WTC11 (cell line): ENCODE measurements at regions of chr5 and their contacts with region 1.

Region 1: GRCh38 chr5:142655339-142656267 is 30.3 kb downstream of the FGF1 start:
- DNase-seq: peak; percentile 88
- ATAC-seq: peak; percentile 90
- H3K4me3 Mint-ChIP-seq: no peak overlapping the region
- H3K27ac Mint-ChIP-seq: no peak overlapping the region
- H3K4me1 Mint-ChIP-seq: peaks cover 14% of the 10 kb centered on the region
- H3K27me3 Mint-ChIP-seq: no peaks in the 10 kb centered on the region
- CTCF ChIP-seq: peak; percentile 93

Region 2: DNA sequence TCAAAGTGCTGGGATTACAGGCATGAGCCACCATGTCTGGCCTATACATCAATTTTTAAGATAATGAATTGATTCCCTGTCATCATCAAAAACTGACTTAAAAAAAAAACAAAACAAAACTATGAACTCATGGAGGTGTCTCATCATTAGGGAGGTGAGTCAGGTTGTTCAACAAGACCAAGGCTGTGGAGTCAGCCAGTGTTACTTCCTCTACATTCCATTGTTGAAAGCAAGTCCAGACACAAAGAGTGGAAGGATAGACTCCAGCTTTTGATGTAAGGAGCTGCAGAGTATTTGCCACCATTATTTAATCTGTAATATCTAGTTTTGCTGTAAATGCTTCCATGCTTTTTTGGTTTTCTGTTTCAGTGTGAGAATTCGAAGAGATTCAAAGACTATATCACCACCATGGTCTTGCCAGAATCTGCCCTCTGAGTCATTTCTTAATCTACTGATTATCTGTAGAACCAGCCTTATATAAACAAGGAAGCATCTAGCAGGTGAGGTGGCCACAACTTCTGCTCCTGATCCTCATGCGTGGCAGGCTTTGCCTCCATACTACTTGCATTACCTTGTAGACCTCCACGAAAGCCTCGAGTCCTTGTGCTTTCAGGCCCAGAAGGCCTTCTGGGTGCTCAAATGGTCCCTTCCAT is 125.9 kb before region 1 on chr5:
- CTCF ChIA-PET with region 1: no interaction called
- POLR2A ChIA-PET with region 1: no interaction called
- DNase-seq: no peak
- ATAC-seq: no peak
- H3K4me3 Mint-ChIP-seq: no peak overlapping the region
- H3K27ac Mint-ChIP-seq: no peak overlapping the region; the same call in 1 of the 2 replicates
- H3K4me1 Mint-ChIP-seq: peaks cover 5% of the 10 kb centered on the region
- H3K27me3 Mint-ChIP-seq: no peaks in the 10 kb centered on the region
- CTCF ChIP-seq: no peak

Region 3: DNA sequence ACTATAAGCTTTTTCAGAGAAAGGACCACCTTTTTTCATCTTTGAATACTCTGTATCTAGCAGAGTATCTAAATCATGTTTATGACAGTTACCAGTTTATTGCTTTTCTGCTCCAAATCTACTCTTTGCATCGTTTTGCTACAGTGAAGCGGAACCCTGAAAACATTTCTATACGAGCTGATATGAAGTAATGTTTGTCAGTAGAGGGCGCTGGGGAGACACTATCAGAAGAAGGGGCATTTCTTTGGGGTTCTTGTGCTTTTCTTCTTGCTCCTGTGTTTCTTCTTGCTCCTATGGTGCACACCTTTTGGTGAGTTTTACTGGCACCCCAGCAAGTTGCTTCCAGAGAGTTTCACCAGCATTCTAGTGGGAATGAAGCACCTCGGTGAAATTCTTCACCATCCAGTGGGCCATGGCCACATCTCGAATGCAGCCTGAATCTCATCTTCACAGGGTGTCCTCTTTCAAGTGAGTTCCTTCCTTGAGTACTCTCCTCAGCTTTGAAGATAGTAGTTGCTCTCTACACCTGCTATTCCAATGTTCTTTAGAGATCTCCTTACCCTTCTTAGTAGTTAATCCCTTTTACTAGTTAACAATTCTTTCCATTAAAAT is 68.1 kb before region 1 on chr5:
- CTCF ChIA-PET with region 1: interaction called, 10 read pairs
- POLR2A ChIA-PET with region 1: no interaction called
- DNase-seq: peak; percentile 53
- ATAC-seq: peak; percentile 81
- H3K4me3 Mint-ChIP-seq: no peak overlapping the region
- H3K27ac Mint-ChIP-seq: no peak overlapping the region
- H3K4me1 Mint-ChIP-seq: peaks cover 20% of the 10 kb centered on the region
- H3K27me3 Mint-ChIP-seq: no peaks in the 10 kb centered on the region; the same call in 1 of the 2 replicates
- CTCF ChIP-seq: peak; percentile 39; the same call in 1 of the 2 replicates

Region 4: GRCh38 chr5:142611154-142611553 is 44.4 kb before region 1 on chr5:
- CTCF ChIA-PET with region 1: interaction called, 42 read pairs
- POLR2A ChIA-PET with region 1: no interaction called
- DNase-seq: peak; percentile 85
- ATAC-seq: peak; percentile 97; the same call in 1 of the 2 replicates
- H3K4me3 Mint-ChIP-seq: no peak overlapping the region
- H3K27ac Mint-ChIP-seq: no peak overlapping the region
- H3K4me1 Mint-ChIP-seq: peaks cover 9% of the 10 kb centered on the region
- H3K27me3 Mint-ChIP-seq: no peaks in the 10 kb centered on the region
- CTCF ChIP-seq: peak; percentile 79

Region 5: DNA sequence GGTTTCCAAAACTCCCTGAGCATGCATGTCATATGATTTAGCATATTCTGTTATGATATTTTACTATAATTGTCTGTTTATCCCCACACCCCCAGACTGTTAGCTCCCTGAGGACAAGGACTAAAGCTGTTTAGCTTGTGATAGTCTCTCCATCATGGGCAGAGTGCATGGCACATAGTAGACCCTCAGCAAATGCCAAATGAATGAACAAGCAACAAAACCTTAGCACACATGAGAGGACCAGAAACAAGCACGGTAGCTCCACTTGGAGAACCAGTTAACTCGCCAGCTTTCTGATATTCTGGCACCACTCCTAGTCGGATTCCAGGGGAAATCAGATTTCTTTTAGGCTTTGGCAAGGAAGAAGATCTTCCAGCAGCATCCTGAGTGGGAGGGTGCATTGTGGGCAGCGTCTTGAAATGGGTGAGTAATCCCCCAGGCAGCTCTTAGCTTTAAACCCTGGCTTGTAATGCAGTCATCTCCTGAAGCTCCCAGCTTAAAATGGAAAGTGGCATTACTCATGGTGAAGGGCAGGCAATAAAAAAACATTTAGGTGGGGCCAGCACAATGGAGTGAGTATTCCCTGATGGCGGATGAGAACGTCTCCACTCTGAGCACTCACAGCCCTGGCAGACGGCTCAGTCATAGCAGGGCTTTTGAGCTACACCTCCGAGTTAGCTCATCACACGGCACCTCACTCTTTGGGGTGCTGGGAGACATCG is 10.8 kb before region 1 on chr5:
- CTCF ChIA-PET with region 1: interaction called, 68 read pairs
- POLR2A ChIA-PET with region 1: no interaction called
- DNase-seq: no peak
- ATAC-seq: no peak
- H3K4me3 Mint-ChIP-seq: no peak overlapping the region
- H3K27ac Mint-ChIP-seq: peak overlapping the region; percentile 5; the same call in 1 of the 2 replicates
- H3K4me1 Mint-ChIP-seq: peaks cover 29% of the 10 kb centered on the region
- H3K27me3 Mint-ChIP-seq: no peaks in the 10 kb centered on the region
- CTCF ChIP-seq: no peak

Region 6: DNA sequence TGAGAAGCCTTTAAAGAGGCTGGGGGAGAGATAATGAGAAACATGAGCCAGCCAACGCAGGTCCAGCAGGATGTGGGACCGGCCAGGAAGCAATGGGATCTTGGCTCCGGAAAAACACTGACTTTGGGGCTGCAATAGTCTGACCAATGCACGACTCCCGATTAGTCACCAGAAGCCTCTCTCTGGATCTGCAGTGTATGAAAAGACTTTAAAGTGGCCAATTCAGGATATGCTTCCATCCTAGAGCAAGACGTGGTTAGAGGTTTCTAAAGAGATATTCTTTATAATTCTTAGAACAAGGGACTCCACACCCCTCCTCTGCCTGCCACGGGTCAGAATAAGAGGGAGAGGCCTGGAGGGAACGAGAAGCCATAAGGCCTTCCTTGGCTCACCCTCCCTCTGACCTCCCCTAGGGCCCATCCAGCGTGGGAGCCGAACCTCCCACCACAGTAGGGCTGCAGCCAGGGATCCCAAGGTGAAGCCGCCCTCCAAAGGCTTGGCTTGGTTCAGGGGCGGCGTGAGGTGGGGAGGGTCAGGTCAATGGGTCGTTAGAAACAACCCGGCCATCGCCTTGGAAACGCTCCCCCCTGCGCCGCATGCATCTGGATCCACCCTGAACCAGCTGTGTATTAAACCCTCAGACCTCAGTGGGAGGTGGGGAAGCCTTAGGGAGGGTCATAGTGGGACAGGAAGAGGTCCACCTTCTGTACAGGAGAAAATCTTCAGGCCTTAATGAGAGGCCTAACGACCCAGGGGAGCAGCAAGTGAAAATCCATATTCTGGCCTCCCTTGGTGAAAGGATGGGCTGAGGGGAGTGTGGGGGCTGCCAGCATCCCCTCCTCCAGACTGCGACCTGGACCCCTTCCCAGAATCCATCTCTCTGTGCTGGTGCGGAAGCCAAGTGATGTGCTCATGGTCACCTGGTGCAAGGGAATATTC is 19.2 kb after region 1 on chr5:
- CTCF ChIA-PET with region 1: interaction called, 21 read pairs
- POLR2A ChIA-PET with region 1: no interaction called
- DNase-seq: no peak
- ATAC-seq: peak; percentile 21; the same call in 1 of the 2 replicates
- H3K4me3 Mint-ChIP-seq: no peak overlapping the region
- H3K27ac Mint-ChIP-seq: no peak overlapping the region
- H3K4me1 Mint-ChIP-seq: peaks cover 21% of the 10 kb centered on the region
- H3K27me3 Mint-ChIP-seq: no peaks in the 10 kb centered on the region; the same call in 1 of the 2 replicates
- CTCF ChIP-seq: no peak

Region 7: DNA sequence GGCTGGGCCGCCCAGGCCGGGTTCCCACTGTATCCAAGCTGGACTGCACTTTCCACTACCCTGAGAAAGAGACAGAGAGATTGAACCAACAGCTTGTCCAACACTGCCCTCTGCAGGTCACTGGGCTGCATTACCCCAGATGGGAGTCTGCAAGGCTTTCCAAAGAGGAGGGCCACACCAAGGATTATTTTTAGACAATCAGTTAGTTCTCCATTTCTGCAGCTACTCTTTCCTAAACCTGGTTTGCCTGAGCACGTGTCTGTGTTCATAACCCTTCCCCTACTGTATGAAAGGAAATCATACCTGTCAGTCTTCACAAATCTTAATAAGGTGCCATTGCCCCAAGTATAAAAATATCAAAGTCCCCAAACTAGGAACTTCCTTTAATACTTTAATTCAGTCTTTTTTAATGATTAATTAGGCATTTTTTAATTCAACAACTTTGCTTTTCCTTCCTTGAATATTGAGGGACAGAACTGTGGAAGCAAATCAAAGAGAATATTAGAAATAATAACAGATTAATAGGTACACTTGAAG is 43.6 kb after region 1 on chr5:
- CTCF ChIA-PET with region 1: interaction called, 240 read pairs
- POLR2A ChIA-PET with region 1: interaction called, 4 read pairs
- DNase-seq: peak; percentile 94
- ATAC-seq: peak; percentile 75
- H3K4me3 Mint-ChIP-seq: no peak overlapping the region
- H3K27ac Mint-ChIP-seq: no peak overlapping the region
- H3K4me1 Mint-ChIP-seq: peaks cover 59% of the 10 kb centered on the region
- H3K27me3 Mint-ChIP-seq: no peaks in the 10 kb centered on the region
- CTCF ChIP-seq: peak; percentile 90

Region 8: GRCh38 chr5:142888469-142889085 is 233.0 kb after region 1 on chr5:
- CTCF ChIA-PET with region 1: interaction called, 24 read pairs
- POLR2A ChIA-PET with region 1: no interaction called
- DNase-seq: no peak
- ATAC-seq: peak; percentile 79
- H3K4me3 Mint-ChIP-seq: no peak overlapping the region
- H3K27ac Mint-ChIP-seq: peak overlapping the region; percentile 55
- H3K4me1 Mint-ChIP-seq: peaks cover 37% of the 10 kb centered on the region
- H3K27me3 Mint-ChIP-seq: no peaks in the 10 kb centered on the region
- CTCF ChIP-seq: peak; percentile 70